ENCODE measurements at regions of chr16 and their contacts with region 1.

Region 1: DNA sequence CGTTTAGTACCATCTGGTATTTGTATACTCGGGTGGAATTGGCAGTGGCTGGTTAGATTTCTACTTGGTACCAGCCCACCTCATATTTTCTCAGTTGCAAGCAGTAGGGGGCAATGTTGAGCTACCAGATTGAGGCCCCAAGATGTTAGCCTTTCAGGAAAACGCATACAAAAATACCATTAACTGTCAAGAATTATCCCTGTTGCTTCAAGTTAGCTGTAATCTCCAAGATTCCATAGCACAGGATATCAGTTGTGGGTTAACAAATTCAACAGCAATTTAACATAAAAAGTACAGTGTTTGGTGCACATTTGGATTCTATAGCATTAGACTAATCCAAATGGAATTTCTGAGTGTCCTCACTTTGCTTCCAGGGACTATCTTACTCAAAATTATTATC is 188.2 kb downstream of the FTO start:
- DNase-seq: peak in 1 of 2 experiments; percentile 47
- H3K4me3 ChIP-seq: no peak overlapping the region
- H3K27ac ChIP-seq: no peak overlapping the region
- H3K4me1 ChIP-seq: peaks cover 32% of the 10 kb centered on the region
- H3K27me3 ChIP-seq: no peaks in the 10 kb centered on the region
- CTCF ChIP-seq: peak; percentile 87

Region 2: GRCh38 chr16:53945996-53946395 is 53.8 kb after region 1 on chr16:
- CTCF ChIA-PET with region 1: no interaction called
- POLR2A ChIA-PET with region 1: no interaction called
- intact Hi-C with region 1: loop called (anchors 10 kb)
- DNase-seq: peak; percentile 3 to 43
- H3K4me3 ChIP-seq: no peak overlapping the region
- H3K27ac ChIP-seq: no peak overlapping the region
- H3K4me1 ChIP-seq: peaks cover 23% of the 10 kb centered on the region
- H3K27me3 ChIP-seq: no peaks in the 10 kb centered on the region
- CTCF ChIP-seq: peak; percentile 77

Region 3: DNA sequence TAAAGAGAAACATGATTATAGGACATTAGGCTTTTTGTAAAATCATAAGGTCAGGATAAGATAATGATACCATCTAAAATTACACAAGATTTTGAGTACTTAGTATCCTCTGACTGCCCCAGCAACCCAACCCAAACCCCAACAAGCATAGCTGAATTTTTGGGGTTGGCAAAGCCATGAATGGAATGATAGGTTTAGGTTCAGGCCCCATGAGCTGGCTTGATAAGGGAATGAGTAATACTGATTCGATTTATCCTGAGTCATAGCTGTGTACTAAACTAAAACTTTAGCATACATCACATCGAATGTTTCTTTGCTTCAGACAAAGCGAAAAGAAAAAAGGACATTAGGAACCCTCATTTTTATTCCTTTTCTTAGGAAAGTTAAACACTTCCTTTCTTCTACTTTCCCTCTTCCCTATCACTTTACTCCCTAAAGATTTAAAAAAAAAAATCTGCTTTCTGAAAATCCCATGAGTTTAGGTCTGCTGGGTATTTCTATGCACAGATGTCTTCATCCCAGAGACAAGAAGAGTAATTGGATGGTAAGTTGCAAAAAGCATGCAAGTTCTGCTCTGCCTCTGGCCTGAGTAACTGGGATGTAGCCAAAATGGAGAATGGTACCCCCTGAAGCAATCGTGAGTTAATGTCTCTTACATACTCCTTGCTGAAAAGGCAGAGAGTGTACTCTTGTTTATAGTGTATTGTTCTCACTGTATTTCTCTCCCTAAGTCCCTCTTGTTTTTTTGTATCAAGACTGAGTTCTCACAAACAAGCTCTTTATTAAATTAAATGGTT is 135.2 kb after region 1 on chr16:
- CTCF ChIA-PET with region 1: no interaction called
- POLR2A ChIA-PET with region 1: no interaction called
- intact Hi-C with region 1: loop called (anchors 2 kb)
- DNase-seq: peak; percentile 66 to 96
- H3K4me3 ChIP-seq: peak overlapping the region; percentile 29; the same call in 1 of the 2 replicates
- H3K27ac ChIP-seq: peak overlapping the region; percentile 90
- H3K4me1 ChIP-seq: peaks cover 69% of the 10 kb centered on the region
- H3K27me3 ChIP-seq: no peaks in the 10 kb centered on the region
- CTCF ChIP-seq: no peak

Region 4: DNA sequence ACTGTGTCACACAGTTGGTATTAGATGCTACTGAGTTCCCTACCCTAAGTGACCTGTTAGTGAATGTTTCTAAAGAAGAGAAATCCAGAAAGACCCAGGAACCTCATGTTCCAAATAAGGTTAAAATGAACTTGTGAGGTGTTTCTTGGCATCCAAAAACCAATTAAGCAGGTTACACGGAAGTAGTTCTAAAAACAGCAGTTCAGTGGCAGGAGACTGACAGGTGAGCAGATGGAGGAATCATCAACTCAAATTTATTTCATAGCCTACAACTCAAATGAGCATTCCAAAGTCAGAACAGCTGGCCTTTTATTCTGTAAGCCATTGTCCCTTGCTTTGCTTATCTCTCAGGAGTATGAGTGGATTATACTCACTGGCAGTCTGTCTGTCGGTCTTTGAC is 206.1 kb after region 1 on chr16:
- CTCF ChIA-PET with region 1: no interaction called
- POLR2A ChIA-PET with region 1: no interaction called
- intact Hi-C with region 1: no loop called
- DNase-seq: no peak
- H3K4me3 ChIP-seq: no peak overlapping the region
- H3K27ac ChIP-seq: no peak overlapping the region
- H3K4me1 ChIP-seq: no peaks in the 10 kb centered on the region
- H3K27me3 ChIP-seq: no peaks in the 10 kb centered on the region
- CTCF ChIP-seq: no peak

Region 5: DNA sequence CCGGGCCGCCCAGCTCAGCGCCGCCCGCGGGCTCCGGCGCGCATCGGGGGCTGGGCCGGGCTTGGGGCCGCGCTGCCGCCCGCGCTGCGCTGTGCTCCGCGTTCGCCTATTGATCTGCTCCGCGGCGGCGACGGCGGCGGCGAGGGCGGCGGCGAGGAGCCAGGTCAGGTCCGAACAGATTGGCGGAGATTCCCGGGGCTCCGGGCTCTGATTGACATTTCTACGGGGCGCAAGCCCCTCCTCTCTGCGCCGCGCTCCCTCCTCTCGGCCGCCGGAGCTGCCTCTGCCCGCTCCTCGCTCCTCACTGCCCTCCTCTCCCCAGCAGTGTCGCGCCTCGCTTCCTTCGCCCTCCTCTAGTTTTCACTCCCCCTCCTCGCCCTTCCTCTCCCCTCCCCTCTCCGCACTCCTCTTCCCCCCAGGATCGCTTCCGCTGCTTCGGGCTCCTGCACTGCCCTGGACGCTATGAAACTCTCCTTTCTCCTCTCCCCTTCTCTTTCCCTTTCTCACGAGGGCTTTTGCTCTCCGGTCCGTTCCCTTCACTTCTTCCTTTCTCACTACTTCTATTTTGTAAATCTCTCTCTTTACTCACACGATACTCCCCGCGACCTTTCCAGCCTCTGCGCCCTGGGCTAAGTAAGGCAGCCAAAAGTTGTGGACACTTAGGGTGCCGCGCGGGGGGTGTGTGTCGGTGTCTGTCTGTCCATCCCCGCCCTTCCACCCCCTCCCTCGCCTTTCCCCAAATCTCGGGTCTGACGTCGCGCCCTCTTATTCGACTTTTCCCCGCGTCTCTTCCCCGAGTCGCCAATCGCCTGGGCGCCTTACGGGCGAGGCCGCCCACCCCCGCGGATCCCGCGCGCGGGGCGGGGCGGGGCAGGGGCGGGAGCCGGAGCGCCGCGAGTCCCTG is 394.2 kb after region 1 on chr16 and contains the start of gene IRX3:
- CTCF ChIA-PET with region 1: no interaction called
- POLR2A ChIA-PET with region 1: no interaction called
- intact Hi-C with region 1: loop called (anchors 2 kb)
- DNase-seq: peak; percentile 88 to 90
- H3K4me3 ChIP-seq: peak within 1 kb of the TSS; percentile 98
- H3K27ac ChIP-seq: peak within 1 kb of the TSS; percentile 86
- H3K4me1 ChIP-seq: peaks cover 6% of the 10 kb centered on the region
- H3K27me3 ChIP-seq: no peaks in the 10 kb centered on the region
- CTCF ChIP-seq: no peak
- total RNA-seq, gene IRX3: 13.1 and 16.0 TPM in 2 replicates

Region 6: DNA sequence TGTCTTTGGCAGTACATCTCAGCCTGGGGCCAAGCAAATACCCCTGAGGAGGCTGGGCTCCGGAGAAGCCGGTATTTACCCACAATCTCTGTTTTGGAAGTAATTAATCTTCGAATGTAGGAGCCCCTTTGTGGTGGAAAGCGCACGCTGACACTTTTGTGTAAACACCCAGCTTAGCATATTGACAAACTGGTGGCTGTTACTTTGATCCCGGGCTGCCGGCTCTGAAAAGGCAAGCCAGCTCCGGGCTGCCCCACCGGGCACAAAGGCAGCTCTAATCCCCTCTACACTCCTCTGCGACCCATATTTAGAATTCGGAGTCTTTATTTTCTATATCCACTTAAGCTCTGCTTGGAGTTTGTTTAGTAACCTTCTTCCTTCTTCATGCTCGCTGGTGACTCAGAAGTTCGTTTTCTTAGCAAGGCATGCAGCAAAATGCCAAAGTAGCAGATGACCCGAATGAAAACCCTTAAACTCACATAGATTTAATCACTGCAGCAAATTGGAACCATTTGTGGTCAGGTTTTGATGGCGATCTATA is 538.4 kb after region 1 on chr16:
- CTCF ChIA-PET with region 1: no interaction called
- POLR2A ChIA-PET with region 1: no interaction called
- intact Hi-C with region 1: loop called (anchors 5 kb)
- DNase-seq: peak in 1 of 2 experiments; percentile 84
- H3K4me3 ChIP-seq: peak overlapping the region; percentile 44; the same call in 1 of the 2 replicates
- H3K27ac ChIP-seq: peak overlapping the region; percentile 91
- H3K4me1 ChIP-seq: peaks cover 54% of the 10 kb centered on the region
- H3K27me3 ChIP-seq: no peaks in the 10 kb centered on the region
- CTCF ChIP-seq: no peak

Region 7: DNA sequence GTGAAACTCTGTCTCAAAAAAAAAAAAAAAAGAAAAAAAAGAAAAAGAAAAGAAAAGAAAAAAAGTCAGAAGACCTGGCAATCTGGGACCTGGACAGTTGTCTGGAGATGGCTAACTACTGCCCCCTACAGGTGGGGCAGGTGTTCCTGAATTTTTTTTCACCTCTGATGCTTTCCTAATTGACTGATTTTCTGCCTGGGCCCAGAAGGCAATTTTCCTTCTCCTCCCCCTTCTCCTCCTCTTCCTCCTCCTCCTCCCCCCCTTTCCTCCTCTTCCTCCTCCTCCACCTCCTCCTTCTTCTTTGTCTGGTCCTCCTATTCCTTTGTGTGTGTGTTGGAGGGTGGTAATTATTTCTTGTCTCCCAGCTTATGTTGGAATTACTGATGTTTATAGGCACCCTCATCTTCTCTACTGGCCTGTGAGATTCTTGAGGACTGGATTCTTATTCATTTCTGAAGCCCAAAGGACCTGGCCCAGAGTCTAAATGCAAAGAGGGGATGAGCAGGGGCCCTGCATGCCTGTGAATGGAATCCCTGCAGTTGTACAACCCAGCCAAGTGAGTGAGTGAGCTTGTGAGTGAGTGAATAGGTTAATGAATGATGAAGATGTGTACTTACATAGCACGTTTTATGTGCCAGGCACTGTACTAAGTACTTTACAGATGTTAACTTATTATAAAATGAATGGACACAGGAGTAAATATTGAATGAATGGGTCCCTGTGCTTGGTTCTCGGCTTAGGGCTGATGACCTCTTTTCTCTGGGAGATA is 1065.4 kb after region 1 on chr16:
- CTCF ChIA-PET with region 1: no interaction called
- POLR2A ChIA-PET with region 1: no interaction called
- intact Hi-C with region 1: loop called (anchors 2 kb)
- DNase-seq: peak; percentile 38 to 51
- H3K4me3 ChIP-seq: no peak overlapping the region
- H3K27ac ChIP-seq: no peak overlapping the region
- H3K4me1 ChIP-seq: no peaks in the 10 kb centered on the region
- H3K27me3 ChIP-seq: no peaks in the 10 kb centered on the region
- CTCF ChIP-seq: peak; percentile 83

Measured in PC-9 (cell line).